GM13976 (cell line): ENCODE measurements at regions of chr17 and their contacts with region 1.

Region 1: GRCh38 chr17:4625181-4625617 is 16.3 kb downstream of the ALOX15 start:
- DNase-seq: no peak
- CTCF ChIP-seq: no peak

Region 2: DNA sequence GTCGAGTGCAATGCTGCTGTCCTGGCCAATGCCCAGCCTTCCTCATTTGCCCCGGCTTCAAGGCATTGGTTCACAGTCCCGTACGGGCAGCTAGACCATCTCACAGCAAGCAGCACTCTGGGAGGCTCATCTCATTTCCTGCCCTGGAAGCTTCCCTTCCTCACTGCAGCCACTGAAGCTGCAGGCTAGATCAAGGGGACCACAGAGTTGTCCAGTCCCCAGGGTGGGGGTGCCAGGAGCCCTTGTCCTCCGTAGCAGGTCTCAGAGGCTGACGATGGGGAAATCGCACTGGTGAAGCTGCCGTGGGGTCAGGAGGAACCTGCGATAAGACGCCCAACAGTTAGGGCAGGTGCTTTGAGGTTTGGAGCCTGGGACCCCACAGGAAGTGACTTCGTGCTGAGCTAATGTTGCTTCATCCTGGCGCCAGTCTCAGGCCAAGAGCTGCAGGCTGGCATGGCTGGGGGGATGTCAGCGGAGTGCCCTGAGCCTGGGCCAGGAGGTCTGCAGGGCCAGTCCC is 191.6 kb before region 1 on chr17 and contains the start of gene SPNS3:
- in situ Hi-C with region 1: loop called (anchors 10 kb)
- DNase-seq: peak; percentile 38
- CTCF ChIP-seq: no peak

Region 3: DNA sequence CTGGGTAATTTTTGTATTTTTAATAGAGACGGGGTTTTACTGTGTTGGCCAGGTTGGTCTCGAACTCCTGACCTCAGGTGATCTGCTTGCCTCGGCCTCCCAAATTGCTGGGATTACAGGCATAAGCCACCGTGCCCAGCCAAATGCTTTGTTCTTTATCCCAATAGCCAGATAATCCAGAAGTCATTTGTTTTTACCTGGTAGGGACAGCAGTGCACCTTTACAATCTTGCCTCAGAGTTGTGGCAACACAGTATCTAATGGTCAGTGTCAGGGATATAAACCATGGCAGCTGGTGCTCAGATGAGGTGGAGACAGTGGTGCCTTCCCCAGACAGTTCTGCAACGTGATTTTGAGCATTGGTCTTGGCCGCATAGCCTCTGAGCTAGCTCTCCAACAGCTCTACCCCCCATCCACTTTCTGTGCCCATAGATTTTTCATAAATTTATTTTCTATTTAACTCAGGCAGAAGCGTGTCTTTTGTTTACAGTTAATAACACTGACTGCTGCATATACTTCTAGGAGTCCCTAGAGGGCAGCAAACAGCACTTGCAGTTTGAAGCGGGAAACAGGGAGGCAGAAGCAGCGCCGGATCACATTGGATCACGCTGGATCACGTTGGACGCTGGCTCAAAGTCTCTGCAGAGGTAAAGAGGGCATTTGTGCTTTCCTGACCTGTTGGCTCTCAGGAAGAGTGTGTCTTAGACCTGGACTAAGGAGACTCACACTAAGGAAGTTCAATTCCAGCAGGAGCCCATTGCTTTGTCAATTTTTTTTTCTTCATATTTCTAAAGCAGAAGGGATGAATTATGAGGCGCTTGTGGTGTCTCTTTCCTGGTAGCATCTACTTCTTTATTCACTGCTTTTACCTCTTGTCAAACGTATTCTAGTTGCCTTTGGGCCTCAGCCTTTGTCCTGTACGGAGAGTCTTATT is 59.7 kb before region 1 on chr17:
- in situ Hi-C with region 1: loop called (anchors 5 kb)
- DNase-seq: peak; percentile 72
- CTCF ChIP-seq: peak; percentile 72